ENCODE measurements at regions of chr1 and their contacts with region 1.

Region 1: GRCh38 chr1:109984456-109985275 is at the start of gene AHCYL1:
- DNase-seq: peak; percentile 99 to 100
- ATAC-seq: peak; percentile 96 to 99 (median 98)
- H3K4me3 ChIP-seq: peak within 1 kb of the TSS; percentile 64 to 90 (median 82)
- H3K27ac ChIP-seq: peak within 1 kb of the TSS; percentile 92 to 99 (median 98)
- H3K4me1 ChIP-seq: peaks cover 6 to 66% (median 53%) of the 10 kb centered on the region in 9 donors
- H3K27me3 ChIP-seq: no peaks in the 10 kb centered on the region
- CTCF ChIP-seq: peak; percentile 96 to 99 (median 99)
- total RNA-seq, gene AHCYL1: 39.2 to 58.9 (median 48.7) TPM

Region 2: GRCh38 chr1:109548321-109549267 is 436.1 kb before region 1 on chr1 and contains the start of gene GNAI3:
- intact Hi-C with region 1: loop called in 8 of 10 experiments (anchors 2 to 10 kb)
- DNase-seq: peak; percentile 95 to 97
- ATAC-seq: peak; percentile 96 to 99 (median 98)
- H3K4me3 ChIP-seq: peak within 1 kb of the TSS; percentile 69 to 96 (median 88)
- H3K27ac ChIP-seq: peak within 1 kb of the TSS; percentile 61 to 98 (median 95)
- H3K4me1 ChIP-seq: peaks cover 0 to 62% (median 46%) of the 10 kb centered on the region in 9 donors
- H3K27me3 ChIP-seq: no peaks in the 10 kb centered on the region
- CTCF ChIP-seq: no peak
- total RNA-seq, gene GNAI3: 2.1 to 3.6 (median 2.8) TPM

Region 3: GRCh38 chr1:109643385-109644230 is 341.1 kb before region 1 on chr1:
- intact Hi-C with region 1: loop called in 4 of 10 experiments (anchors 5 to 10 kb)
- DNase-seq: peak; percentile 81 to 90
- ATAC-seq: peak; percentile 71 to 94 (median 89)
- H3K4me3 ChIP-seq: peak overlapping the region in 1 of 10 donors; percentile 7
- H3K27ac ChIP-seq: no peak overlapping the region
- H3K4me1 ChIP-seq: peaks cover 0 to 12% (median 6%) of the 10 kb centered on the region in 9 donors
- H3K27me3 ChIP-seq: no peaks in the 10 kb centered on the region
- CTCF ChIP-seq: peak; percentile 75 to 93 (median 88)

Region 4: GRCh38 chr1:109655601-109656519 is 328.8 kb before region 1 on chr1 and contains the start of gene GSTM4:
- intact Hi-C with region 1: loop called in 2 of 10 experiments (anchors 5 to 10 kb)
- DNase-seq: peak; percentile 88 to 90
- ATAC-seq: peak; percentile 93 to 98 (median 96)
- H3K4me3 ChIP-seq: peak within 1 kb of the TSS; percentile 54 to 83 (median 70)
- H3K27ac ChIP-seq: peak within 1 kb of the TSS; percentile 59 to 96 (median 88)
- H3K4me1 ChIP-seq: peaks cover 0 to 34% (median 11%) of the 10 kb centered on the region in 9 donors
- H3K27me3 ChIP-seq: no peaks in the 10 kb centered on the region
- CTCF ChIP-seq: peak in 2 of 9 donors; percentile 27 to 34
- total RNA-seq, gene GSTM4: 29.9 to 62.1 (median 43.5) TPM

Region 5: DNA sequence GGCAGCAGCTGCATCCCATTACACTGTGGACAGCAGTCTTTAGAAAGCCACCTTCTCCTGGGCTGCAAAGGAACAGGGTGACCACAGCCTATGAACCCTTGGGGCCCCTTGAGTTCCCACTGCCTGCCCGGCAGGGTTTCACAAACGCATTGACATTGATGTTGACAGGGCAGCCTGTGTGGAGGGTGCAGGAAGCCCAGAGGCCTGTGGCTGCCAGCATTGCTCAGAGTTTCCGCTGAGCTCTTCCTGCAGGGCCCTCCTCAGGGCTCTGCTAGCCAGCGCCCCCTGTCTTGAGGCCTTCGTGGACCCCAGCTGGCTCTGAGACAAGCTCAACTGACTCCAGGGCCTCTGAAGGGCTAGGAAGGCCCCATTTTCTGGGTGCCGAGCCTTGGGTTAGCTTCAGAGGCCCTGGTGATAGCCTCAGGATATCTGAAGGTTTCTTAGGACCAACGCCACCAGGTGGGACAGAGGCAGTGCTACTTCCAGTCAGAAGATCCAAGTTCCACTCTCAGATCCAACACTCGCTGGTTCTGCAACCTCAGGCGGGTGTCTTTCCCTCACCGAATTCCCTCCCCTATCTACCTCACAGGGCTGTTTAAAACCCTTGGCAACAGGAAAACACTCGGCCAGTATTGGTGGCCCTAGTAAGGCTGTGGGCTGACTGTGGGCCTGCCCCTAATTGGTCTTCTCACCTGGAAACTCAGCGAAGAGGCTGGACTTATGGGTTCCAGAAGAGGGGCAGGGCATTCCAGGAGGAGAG is 193.8 kb before region 1 on chr1:
- intact Hi-C with region 1: loop called in 4 of 10 experiments (anchors 2 to 5 kb)
- DNase-seq: peak; percentile 55 to 63
- ATAC-seq: peak; percentile 54 to 72 (median 66)
- H3K4me3 ChIP-seq: no peak overlapping the region
- H3K27ac ChIP-seq: peak overlapping the region in 9 of 10 donors; percentile 5 to 80 (median 47)
- H3K4me1 ChIP-seq: peaks cover 33 to 78% (median 62%) of the 10 kb centered on the region in 9 donors
- H3K27me3 ChIP-seq: no peaks in the 10 kb centered on the region
- CTCF ChIP-seq: peak in 8 of 9 donors; percentile 37 to 73 (median 60)

Region 6: GRCh38 chr1:109923131-109923945 is 61.3 kb before region 1 on chr1:
- intact Hi-C with region 1: loop called in 4 of 10 experiments (anchors 5 to 10 kb)
- DNase-seq: no peak
- ATAC-seq: no peak
- H3K4me3 ChIP-seq: no peak overlapping the region
- H3K27ac ChIP-seq: peak overlapping the region in 2 of 10 donors; percentile 16 to 48
- H3K4me1 ChIP-seq: peaks cover 9 to 49% (median 19%) of the 10 kb centered on the region in 9 donors
- H3K27me3 ChIP-seq: no peaks in the 10 kb centered on the region
- CTCF ChIP-seq: peak; percentile 20 to 58 (median 46)